Head of caudate nucleus (tissue), 42 donors: ENCODE measurements at regions of chr12 and their contacts with region 1.

Region 1: GRCh38 chr12:106136263-106136662 is 2.5 kb downstream of the NUAK1 start:
- DNase-seq: peak; percentile 81 to 99 (median 95)

Region 2: DNA sequence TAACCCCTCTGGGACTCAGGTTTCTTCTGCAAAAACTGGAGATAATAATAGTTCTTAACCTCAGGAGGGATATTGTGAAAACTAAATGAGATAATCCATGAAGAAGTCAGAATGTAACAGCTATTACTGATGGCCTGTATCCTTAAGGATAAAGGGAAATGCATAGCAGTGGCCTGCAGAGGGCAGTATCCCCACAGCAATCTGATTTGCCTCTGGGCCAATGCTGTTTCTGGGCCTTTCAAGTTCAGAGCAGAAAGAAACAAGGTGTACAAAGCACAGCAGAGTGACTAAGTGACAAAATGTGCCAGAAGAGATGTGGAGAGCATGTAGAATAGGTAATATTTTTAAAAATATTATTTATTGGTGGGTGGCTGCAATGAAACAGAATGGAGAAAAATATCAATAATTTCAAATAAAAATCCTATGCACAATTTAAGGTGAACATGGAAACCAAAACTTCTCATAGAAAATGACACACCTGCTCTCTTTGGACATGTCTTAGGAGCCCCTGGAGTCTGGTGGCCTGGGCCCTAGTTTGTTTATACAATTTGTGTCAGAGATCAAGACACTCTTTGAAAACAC is 715.5 kb before region 1 on chr12:
- intact Hi-C with region 1: loop called (anchors 10 kb)
- DNase-seq: peak; percentile 62 to 91 (median 84)

Region 3: GRCh38 chr12:105705765-105706164 is 430.5 kb before region 1 on chr12:
- intact Hi-C with region 1: loop called (anchors 2 kb)
- DNase-seq: peak in 40 of 42 donors; percentile 7 to 89 (median 71)

Region 4: DNA sequence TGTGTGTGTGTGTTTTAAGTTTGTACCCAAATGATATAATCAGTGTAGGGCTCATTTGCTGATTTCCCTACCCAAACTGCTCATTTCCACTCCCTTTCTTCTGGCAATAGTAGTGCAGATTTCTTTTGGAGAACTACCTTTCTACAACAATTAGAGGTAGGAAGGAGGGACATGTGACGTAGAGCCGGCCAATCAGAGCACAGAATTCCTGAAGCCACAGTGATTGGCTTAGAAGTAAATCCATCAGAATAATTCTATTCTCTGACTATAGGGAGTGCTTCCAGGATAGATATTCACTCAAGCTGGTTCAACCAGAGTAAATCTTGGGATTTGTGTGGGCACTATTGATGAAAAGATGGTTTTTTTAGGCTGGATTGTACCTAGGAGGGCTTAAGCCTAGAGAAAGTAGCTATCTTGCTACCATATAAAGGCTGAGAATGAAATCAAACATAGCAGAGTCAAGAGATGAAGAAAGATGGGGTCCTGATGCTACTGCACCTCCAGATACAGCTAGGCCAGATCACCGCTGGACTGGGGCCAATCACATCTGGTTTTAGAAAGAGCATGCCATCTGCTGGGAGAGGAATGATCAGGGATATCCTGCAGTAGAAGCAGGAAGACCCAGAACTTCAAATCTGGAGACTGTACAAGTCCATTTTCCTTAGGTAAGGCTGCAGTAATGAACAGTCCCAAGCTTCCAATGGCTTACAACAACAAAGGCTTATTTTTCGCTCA is 56.6 kb after region 1 on chr12:
- intact Hi-C with region 1: no loop called
- DNase-seq: peak in 23 of 42 donors; percentile 4 to 79 (median 33)

Region 5: GRCh38 chr12:107152315-107152714 is 1016.1 kb after region 1 on chr12:
- intact Hi-C with region 1: no loop called
- DNase-seq: no peak